K562 (cell line): ENCODE measurements at regions of chr13 and their contacts with region 1.

Region 1: GRCh38 chr13:52617070-52618060 is 24.9 kb upstream of the HNRNPA1L2 start:
- DNase-seq: peak; percentile 72 to 86 (median 78)
- ATAC-seq: peak; percentile 99
- H3K4me3 ChIP-seq: peak overlapping the region; percentile 83
- H3K27ac ChIP-seq: peak overlapping the region; percentile 68
- H3K4me1 ChIP-seq: no peaks in the 10 kb centered on the region; a peak in 2 of 5 replicates
- H3K27me3 ChIP-seq: no peaks in the 10 kb centered on the region
- CTCF ChIP-seq: no peak
- EP300 ChIP-seq: peak; percentile 14; the same call in 1 of the 2 replicates
- POLR2A ChIP-seq: peak; percentile 73
- RAD21 ChIP-seq: no peak

Region 2: DNA sequence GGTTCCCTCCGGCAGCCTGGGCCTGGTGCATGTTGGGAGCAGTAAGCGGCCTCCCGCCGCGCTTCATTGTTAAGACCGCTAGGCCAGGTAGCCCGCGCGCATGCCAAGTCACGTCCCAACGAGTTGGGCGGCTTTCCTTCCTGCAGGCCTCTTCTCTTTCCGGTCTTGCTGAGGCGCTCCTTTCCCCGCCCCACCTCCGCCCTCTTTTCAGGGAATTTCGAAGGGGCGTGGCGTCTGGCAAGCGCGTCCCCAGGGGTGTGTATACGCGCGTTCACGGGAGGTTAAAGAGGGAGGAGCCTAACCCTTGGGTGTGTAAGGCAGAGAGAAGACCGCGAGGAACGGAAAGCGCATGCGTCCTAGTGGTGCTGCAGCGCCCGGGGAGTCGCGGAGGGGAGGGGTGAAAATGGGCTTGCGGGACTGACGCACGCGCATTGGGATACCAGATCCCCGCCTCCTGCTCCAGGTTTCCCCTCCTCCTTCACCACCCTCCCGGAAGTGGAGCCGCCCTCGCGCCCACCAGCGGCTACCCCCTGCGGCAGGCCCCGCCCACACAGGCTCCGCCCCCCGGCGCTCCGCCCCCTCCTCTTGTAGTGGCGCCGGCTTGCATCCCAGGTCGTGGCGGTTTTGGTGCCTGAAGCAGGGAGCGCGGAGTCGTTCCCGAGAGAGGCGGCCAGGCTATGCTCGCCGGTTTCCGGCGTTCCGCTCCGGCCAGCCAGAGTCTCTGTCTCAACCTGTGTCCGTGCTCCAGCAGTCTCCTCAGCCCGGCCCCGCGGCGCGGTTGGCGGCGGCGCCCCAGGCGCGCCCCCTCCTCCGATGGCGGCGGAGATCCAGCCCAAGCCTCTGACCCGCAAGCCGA is 1033.3 kb before region 1 on chr13 and contains the start of gene WDFY2:
- CTCF ChIA-PET with region 1: no interaction called
- POLR2A ChIA-PET with region 1: no interaction called
- in situ Hi-C with region 1: no loop called
- intact Hi-C with region 1: no loop called
- DNase-seq: peak; percentile 92 to 97 (median 92)
- ATAC-seq: peak; percentile 91
- H3K4me3 ChIP-seq: peak within 1 kb of the TSS; percentile 82
- H3K27ac ChIP-seq: peak within 1 kb of the TSS; percentile 85
- H3K4me1 ChIP-seq: peaks cover 10 to 32% of the 10 kb centered on the region in 2 experiments; a peak in 4 of 5 replicates
- H3K27me3 ChIP-seq: no peaks in the 10 kb centered on the region
- CTCF ChIP-seq: peak in 2 of 3 experiments; percentile 18 to 37; a peak in 3 of 6 replicates
- EP300 ChIP-seq: peak; percentile 28; the same call in 1 of the 2 replicates
- POLR2A ChIP-seq: peak; percentile 64
- RAD21 ChIP-seq: no peak
- polyA plus RNA-seq, gene WDFY2: 0.66 to 1.1 TPM

Region 3: DNA sequence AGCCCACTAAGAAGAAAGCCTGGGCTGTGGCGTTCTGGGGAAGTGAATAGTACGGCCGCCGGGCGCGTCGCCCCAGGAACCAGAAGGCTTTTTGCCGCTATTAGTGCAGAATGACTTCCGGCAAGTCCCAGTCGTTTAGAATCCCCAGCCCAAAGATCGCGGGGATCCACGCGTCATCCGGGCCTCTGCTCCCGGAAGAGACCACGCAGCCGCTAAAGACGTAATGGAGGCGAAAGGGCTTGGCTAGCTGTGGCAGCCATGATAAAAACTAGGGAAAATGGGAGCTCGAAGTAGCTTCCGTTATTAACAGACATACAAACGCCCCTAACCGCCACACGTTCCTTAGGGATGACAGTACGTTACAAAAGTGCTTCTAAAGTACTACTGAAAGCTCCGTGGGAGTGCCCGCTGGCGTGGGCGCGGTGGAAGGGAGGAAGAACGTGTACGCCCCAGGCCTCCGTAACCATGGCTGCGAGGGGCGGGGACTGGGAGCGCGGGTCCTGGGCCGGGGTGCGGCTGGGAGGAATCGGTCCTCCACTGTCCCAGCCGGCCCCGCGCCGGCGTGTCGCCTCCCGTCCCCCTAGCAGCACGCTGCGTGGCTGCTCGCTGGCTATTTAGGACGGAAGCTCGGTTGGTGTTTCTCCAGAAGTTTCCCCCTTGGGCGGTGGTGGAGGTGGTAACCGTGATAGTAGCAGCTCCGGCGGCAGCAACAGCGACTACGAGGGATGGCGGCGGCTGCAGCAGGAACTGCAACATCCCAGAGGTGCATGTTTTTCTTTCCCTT is 35.0 kb after region 1 on chr13 and contains the start of gene SUGT1:
- CTCF ChIA-PET with region 1: no interaction called
- POLR2A ChIA-PET with region 1: interaction called, 8 read pairs
- in situ Hi-C with region 1: no loop called
- intact Hi-C with region 1: loop called (anchors 1 kb)
- DNase-seq: peak; percentile 79 to 95 (median 82)
- ATAC-seq: peak; percentile 96
- H3K4me3 ChIP-seq: peak within 1 kb of the TSS; percentile 66
- H3K27ac ChIP-seq: peak within 1 kb of the TSS; percentile 92
- H3K4me1 ChIP-seq: peaks cover 0 to 5% of the 10 kb centered on the region in 2 experiments; a peak in 1 of 5 replicates
- H3K27me3 ChIP-seq: no peaks in the 10 kb centered on the region
- CTCF ChIP-seq: peak; percentile 58 to 75 (median 70)
- EP300 ChIP-seq: no peak
- POLR2A ChIP-seq: peak; percentile 82
- RAD21 ChIP-seq: peak; percentile 5 to 18; a peak in 1 of 4 replicates
- polyA plus RNA-seq, gene SUGT1: 59.0 to 60.4 TPM

Region 4: GRCh38 chr13:52809310-52809769 is 192.0 kb after region 1 on chr13:
- CTCF ChIA-PET with region 1: no interaction called
- POLR2A ChIA-PET with region 1: no interaction called
- in situ Hi-C with region 1: loop called (anchors 10 kb)
- intact Hi-C with region 1: no loop called
- DNase-seq: peak; percentile 82 to 87 (median 84)
- ATAC-seq: peak; percentile 94
- H3K4me3 ChIP-seq: no peak overlapping the region
- H3K27ac ChIP-seq: no peak overlapping the region
- H3K4me1 ChIP-seq: no peaks in the 10 kb centered on the region
- H3K27me3 ChIP-seq: no peaks in the 10 kb centered on the region; a peak in 1 of 5 replicates
- CTCF ChIP-seq: peak; percentile 68 to 75 (median 74)
- EP300 ChIP-seq: no peak
- POLR2A ChIP-seq: no peak
- RAD21 ChIP-seq: peak; percentile 62 to 73

Region 5: DNA sequence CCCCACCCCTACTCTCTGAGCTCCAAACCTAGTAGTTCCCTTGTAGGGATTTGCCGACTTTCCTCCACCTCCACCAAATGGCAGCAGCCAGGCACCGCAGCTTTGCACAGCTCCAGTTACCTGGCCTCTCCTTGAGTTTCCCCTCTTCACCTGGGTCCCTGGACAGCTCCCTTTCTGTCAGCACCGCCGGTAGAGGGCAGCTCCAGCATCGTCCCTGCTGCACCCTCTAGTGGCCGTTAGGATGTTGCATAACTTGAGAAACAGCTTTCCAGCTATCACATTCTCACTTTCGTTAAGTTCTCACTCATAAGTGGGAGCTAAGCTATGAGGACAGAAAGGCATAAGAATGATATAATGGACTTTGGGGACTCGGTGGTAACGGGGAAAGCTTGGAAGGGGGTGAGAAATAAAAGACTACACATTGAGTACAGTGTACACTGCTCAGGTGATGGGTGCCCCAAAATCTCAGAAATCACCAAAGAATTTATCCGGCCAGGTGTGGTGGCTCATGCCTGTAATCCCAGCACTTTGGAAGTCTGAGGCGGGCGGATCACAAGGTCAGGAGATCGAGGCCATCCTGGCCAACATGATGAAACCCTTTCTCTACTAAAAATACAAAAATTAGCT is 350.8 kb after region 1 on chr13:
- CTCF ChIA-PET with region 1: interaction called, 4 read pairs
- POLR2A ChIA-PET with region 1: no interaction called
- in situ Hi-C with region 1: loop called (anchors 25 kb)
- intact Hi-C with region 1: no loop called
- DNase-seq: peak; percentile 52 to 71 (median 60)
- ATAC-seq: peak; percentile 99
- H3K4me3 ChIP-seq: no peak overlapping the region
- H3K27ac ChIP-seq: no peak overlapping the region
- H3K4me1 ChIP-seq: no peaks in the 10 kb centered on the region
- H3K27me3 ChIP-seq: no peaks in the 10 kb centered on the region
- CTCF ChIP-seq: peak; percentile 95 to 99 (median 99)
- EP300 ChIP-seq: no peak
- POLR2A ChIP-seq: no peak
- RAD21 ChIP-seq: peak; percentile 57 to 71

Region 6: DNA sequence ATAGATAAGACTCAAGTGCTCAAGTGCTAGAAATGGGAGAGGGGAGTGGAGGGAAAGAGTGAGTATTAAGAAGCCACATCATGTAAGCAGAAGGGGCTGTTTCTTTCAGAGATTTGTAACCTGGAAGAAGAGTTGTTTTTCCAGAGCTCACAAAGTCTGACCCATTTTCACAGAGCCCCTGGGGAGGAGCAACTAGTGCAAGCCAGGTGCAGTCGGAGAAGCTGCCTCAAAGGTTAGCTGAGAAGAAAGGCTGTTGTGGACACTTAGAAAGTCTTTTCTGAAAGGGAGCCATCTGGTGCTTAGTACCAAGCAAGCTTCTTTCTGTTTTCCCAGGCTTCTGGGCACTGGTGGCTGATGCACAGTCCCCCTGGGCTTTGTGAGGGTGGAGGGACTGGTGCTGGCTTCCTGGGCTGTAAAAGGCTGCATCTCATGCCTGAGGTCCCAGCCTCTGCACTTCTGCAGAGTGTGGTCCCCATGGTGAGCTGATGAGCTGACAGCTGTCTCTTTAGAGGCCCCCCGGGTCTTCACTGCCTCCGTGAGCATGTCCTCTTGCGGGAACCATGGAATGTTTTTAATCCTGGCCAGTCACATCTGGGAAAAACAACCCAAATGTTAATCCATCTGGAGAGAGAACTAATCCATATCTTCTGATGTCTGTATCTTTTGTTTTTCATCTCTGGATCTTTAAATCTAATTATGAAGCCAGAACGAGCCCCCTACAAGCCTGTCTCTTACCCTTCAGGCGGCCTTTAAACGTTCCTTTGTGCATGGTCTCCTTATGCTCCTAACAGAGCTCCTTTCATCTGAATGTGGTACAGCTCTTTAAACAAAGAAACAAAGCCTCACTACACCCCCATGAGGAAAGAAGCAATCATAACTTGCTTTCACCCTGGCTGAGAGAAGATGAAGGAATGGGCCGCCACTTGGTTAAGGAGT is 451.5 kb after region 1 on chr13:
- CTCF ChIA-PET with region 1: no interaction called
- POLR2A ChIA-PET with region 1: no interaction called
- in situ Hi-C with region 1: no loop called
- intact Hi-C with region 1: no loop called
- DNase-seq: no peak
- ATAC-seq: no peak
- H3K4me3 ChIP-seq: no peak overlapping the region
- H3K27ac ChIP-seq: no peak overlapping the region
- H3K4me1 ChIP-seq: no peaks in the 10 kb centered on the region
- H3K27me3 ChIP-seq: no peaks in the 10 kb centered on the region
- CTCF ChIP-seq: no peak
- EP300 ChIP-seq: no peak
- POLR2A ChIP-seq: no peak
- RAD21 ChIP-seq: no peak

Region 7: GRCh38 chr13:53151336-53152056 is 534.1 kb after region 1 on chr13:
- CTCF ChIA-PET with region 1: no interaction called
- POLR2A ChIA-PET with region 1: no interaction called
- in situ Hi-C with region 1: loop called (anchors 25 kb)
- intact Hi-C with region 1: no loop called
- DNase-seq: peak; percentile 38 to 54 (median 47)
- ATAC-seq: peak; percentile 82
- H3K4me3 ChIP-seq: no peak overlapping the region
- H3K27ac ChIP-seq: no peak overlapping the region
- H3K4me1 ChIP-seq: no peaks in the 10 kb centered on the region
- H3K27me3 ChIP-seq: no peaks in the 10 kb centered on the region
- CTCF ChIP-seq: peak; percentile 65 to 74 (median 66)
- EP300 ChIP-seq: no peak
- POLR2A ChIP-seq: no peak
- RAD21 ChIP-seq: peak; percentile 35 to 59; a peak in 3 of 4 replicates